Naive thymus-derived CD8-positive, alpha-beta T cell (primary cell): ENCODE measurements at regions of chr4 and their contacts with region 1.

Region 1: DNA sequence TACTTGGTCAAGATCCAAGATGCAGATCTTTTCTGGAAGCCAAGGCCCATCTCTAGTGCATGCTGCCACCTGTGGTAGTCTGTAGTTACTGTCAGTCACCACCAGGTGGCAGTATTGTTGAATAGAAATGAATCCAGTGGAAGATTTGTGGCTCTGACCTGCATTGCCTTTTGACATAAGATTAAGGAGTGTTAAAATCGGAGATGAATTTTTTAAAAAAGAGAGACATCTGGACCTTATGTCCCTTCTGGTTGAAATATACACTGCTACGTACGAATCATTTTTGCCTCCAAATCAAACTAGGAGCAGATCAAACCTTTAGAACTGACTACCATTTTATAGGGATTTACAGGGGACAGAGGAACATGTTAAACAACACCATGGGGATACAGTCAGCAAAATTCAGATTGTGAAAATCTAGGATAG is 46.9 kb upstream of the RHOH start:
- DNase-seq: peak; percentile 33 to 87 (median 77)
- ATAC-seq: peak; percentile 85 to 90
- H3K4me3 Mint-ChIP-seq: peak overlapping the region in 6 of 10 donors; percentile 1 to 56 (median 31)
- H3K27ac Mint-ChIP-seq: peak overlapping the region; percentile 69 to 91 (median 88)
- H3K4me1 Mint-ChIP-seq: peaks cover 14 to 45% (median 38%) of the 10 kb centered on the region in 4 donors
- H3K27me3 Mint-ChIP-seq: no peaks in the 10 kb centered on the region

Region 2: GRCh38 chr4:40056716-40057585 is 93.0 kb before region 1 on chr4 and contains the start of gene N4BP2:
- POLR2A ChIA-PET with region 1: interaction called, 10 read pairs
- DNase-seq: peak; percentile 51 to 85 (median 72)
- ATAC-seq: peak; percentile 65 to 67
- H3K4me3 Mint-ChIP-seq: peak within 1 kb of the TSS; percentile 92 to 100 (median 95)
- H3K27ac Mint-ChIP-seq: peak within 1 kb of the TSS; percentile 80 to 99 (median 97)
- H3K4me1 Mint-ChIP-seq: peaks cover 17 to 36% (median 33%) of the 10 kb centered on the region in 4 donors
- H3K27me3 Mint-ChIP-seq: no peaks in the 10 kb centered on the region
- polyA plus RNA-seq, gene N4BP2: 10.7 to 14.3 (median 13.5) TPM

Region 3: GRCh38 chr4:40185830-40186664 is 36.1 kb after region 1 on chr4:
- POLR2A ChIA-PET with region 1: interaction called, 16 read pairs
- DNase-seq: no peak
- ATAC-seq: no peak
- H3K4me3 Mint-ChIP-seq: peak overlapping the region in 1 of 10 donors; percentile 64
- H3K27ac Mint-ChIP-seq: peak overlapping the region in 4 of 10 donors; percentile 17 to 84 (median 72)
- H3K4me1 Mint-ChIP-seq: peaks cover 23 to 68% (median 51%) of the 10 kb centered on the region in 4 donors
- H3K27me3 Mint-ChIP-seq: no peaks in the 10 kb centered on the region

Region 4: GRCh38 chr4:40316782-40317635 is 167.0 kb after region 1 on chr4:
- POLR2A ChIA-PET with region 1: interaction called, 10 read pairs
- DNase-seq: peak in 9 of 10 donors; percentile 49 to 82 (median 71)
- ATAC-seq: peak; percentile 71 to 76
- H3K4me3 Mint-ChIP-seq: peak overlapping the region; percentile 81 to 91 (median 83)
- H3K27ac Mint-ChIP-seq: peak overlapping the region; percentile 90 to 98 (median 96)
- H3K4me1 Mint-ChIP-seq: peaks cover 27 to 49% (median 47%) of the 10 kb centered on the region in 4 donors
- H3K27me3 Mint-ChIP-seq: no peaks in the 10 kb centered on the region